ENCODE measurements at regions of chr19 and their contacts with region 1.

Region 1: DNA sequence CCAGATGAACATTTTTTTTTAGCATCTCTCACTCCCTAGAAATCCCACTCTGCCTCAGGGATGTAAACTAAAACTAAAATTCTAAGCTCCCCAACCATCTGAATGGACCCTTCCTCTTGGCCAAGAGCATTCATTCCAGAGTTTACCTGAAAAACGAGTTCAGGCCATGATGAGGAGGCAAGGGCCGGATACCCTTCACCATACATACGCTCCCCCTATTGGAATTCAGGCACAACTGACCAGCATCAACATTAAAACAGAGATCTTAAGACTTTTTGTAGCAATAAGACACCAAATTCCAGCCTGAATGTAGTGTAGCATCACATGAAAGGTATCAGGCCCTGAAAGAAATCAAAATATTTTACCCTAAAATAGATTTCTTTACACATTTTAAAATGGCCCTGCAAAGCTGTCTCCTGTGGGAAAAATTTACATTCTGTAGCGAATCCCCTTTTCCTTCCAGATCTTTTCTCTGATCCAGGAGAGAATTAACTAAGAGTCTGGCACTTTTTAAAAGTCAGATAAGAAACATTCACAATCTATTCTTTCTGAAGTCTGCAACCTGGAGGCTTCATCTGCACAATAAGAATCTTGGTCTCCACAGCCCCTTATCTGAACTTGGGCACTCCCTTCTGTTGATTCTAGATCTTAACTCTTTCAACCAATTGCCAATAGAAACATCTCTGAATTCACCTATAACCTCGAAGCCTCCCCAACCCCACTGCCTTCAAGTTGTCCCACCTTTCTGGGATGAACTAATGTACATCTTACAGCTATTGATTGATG is 888.5 kb downstream of the UQCRFS1 start:
- DNase-seq: no peak
- H3K4me3 ChIP-seq: no peak overlapping the region
- H3K27ac ChIP-seq: no peak overlapping the region
- H3K4me1 ChIP-seq: no peaks in the 10 kb centered on the region
- H3K27me3 ChIP-seq: peaks cover 0 to 3% of the 10 kb centered on the region in 2 experiments
- CTCF ChIP-seq: no peak
- POLR2A ChIP-seq: no peak

Region 2: DNA sequence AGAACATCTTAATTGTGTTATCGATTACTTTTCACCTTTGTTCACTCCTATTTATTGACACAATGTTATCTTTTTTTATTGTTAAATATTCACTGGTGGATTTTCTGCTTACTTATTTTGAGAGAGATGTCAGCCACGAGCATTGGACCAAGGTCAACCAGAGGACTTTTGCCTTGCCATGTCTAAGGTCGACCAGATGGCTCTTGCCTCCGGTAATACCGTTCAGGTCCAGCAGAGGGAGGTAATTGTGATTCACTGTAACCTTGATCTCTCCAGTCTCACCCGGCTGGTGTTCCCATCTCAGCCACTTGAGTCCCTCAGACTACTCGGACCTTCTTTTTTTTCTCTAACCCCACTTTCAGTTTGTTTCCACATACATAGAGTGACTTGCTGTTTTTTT is 549.6 kb before region 1 on chr19:
- CTCF ChIA-PET with region 1: no interaction called
- POLR2A ChIA-PET with region 1: no interaction called
- dilution Hi-C with region 1: no loop called
- intact Hi-C with region 1: loop called (anchors 10 kb)
- DNase-seq: no peak
- H3K4me3 ChIP-seq: no peak overlapping the region
- H3K27ac ChIP-seq: no peak overlapping the region
- H3K4me1 ChIP-seq: no peaks in the 10 kb centered on the region
- H3K27me3 ChIP-seq: no peaks in the 10 kb centered on the region
- CTCF ChIP-seq: peak; percentile 12 to 26
- POLR2A ChIP-seq: no peak

Region 3: DNA sequence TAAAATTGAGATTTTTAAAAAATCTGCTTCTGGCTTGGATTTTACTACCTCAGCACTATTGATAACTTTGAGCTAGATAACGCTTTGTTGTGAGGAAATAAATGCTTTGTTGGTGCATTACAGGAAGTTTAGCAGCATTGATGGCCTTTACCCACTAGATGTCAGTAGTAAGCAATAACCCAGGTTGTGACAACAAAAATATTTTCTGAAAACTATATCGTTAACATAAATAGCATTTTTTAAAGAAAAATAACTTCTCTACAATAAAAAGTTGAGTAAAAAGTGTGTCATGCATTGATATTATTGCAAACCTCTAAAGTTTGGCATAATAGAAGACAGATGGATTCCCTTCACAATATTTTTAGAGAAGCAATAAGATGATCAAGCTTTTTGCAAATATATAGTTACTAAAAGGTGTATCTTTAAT is 358.1 kb before region 1 on chr19:
- CTCF ChIA-PET with region 1: interaction called, 6 read pairs
- POLR2A ChIA-PET with region 1: no interaction called
- dilution Hi-C with region 1: no loop called
- intact Hi-C with region 1: loop called (anchors 1 kb)
- DNase-seq: no peak
- H3K4me3 ChIP-seq: no peak overlapping the region
- H3K27ac ChIP-seq: no peak overlapping the region
- H3K4me1 ChIP-seq: no peaks in the 10 kb centered on the region
- H3K27me3 ChIP-seq: no peaks in the 10 kb centered on the region
- CTCF ChIP-seq: peak; percentile 23 to 41
- POLR2A ChIP-seq: no peak

Region 4: DNA sequence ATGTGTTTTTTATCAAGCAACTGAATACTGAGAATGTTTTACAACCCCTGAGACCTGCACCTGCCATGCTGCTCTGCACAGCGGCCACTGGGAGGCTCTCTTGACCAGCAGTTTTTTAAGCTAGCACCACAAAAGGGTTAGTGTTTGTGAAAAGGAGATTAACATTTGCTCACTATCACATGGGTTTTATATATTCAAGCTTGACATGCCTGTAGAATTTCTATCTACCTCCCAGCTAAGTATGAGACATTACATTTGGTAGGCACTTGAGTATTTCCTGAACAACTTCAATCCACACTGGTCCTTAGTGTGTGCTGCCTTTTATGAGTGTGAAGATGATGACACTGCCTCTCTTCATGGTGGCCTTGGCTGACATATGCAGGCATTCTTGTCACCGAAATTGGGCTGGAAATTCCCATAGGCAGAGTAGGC is 350.4 kb before region 1 on chr19:
- CTCF ChIA-PET with region 1: no interaction called
- POLR2A ChIA-PET with region 1: no interaction called
- dilution Hi-C with region 1: no loop called
- intact Hi-C with region 1: loop called (anchors 2 kb)
- DNase-seq: no peak
- H3K4me3 ChIP-seq: no peak overlapping the region
- H3K27ac ChIP-seq: no peak overlapping the region
- H3K4me1 ChIP-seq: no peaks in the 10 kb centered on the region
- H3K27me3 ChIP-seq: no peaks in the 10 kb centered on the region
- CTCF ChIP-seq: peak in 1 of 2 donors; percentile 15
- POLR2A ChIP-seq: no peak

Region 5: DNA sequence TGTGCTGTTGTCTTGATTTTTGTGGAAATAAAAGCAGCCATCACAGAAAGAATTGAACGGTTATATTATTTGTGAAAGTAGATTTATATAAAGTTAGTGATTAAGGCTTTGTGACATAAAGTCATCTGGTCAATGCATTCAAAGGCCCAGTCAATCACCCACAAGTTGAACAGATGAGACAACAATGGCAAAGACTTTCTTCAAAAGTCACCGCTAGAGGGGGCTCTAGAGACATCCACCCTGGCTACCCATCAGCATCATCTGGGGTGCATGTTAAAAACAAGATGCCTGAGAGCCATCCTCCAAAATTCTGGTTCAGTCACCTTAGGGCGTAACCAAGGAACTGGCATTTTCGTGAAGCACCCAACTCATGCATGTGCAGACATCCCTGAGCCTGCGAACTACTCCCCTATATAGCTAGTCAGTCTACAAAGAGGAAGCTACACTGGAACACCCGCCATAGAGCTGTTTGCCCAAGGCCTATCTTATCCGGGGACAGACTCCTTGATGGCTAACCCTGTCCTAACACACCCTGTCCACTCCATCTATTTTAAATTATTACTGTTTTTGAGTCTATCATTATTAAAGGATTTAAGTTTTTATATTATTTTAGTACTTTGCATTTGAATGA is 82.1 kb before region 1 on chr19:
- CTCF ChIA-PET with region 1: interaction called, 6 read pairs
- POLR2A ChIA-PET with region 1: no interaction called
- dilution Hi-C with region 1: no loop called
- intact Hi-C with region 1: loop called (anchors 1 kb)
- DNase-seq: peak; percentile 3
- H3K4me3 ChIP-seq: no peak overlapping the region
- H3K27ac ChIP-seq: no peak overlapping the region
- H3K4me1 ChIP-seq: no peaks in the 10 kb centered on the region
- H3K27me3 ChIP-seq: no peaks in the 10 kb centered on the region
- CTCF ChIP-seq: peak; percentile 24 to 38
- POLR2A ChIP-seq: no peak

Measured in endothelial cell of umbilical vein (primary cell).